Activated naive CD4-positive, alpha-beta T cell treated with anti-CD3 and anti-CD28 coated beads, Interleukin-2, amount 10 ng/mL, durations not matched to agents 7 days and 5 days (primary cell): ENCODE measurements at regions of chr3 and their contacts with region 1.

Region 1: DNA sequence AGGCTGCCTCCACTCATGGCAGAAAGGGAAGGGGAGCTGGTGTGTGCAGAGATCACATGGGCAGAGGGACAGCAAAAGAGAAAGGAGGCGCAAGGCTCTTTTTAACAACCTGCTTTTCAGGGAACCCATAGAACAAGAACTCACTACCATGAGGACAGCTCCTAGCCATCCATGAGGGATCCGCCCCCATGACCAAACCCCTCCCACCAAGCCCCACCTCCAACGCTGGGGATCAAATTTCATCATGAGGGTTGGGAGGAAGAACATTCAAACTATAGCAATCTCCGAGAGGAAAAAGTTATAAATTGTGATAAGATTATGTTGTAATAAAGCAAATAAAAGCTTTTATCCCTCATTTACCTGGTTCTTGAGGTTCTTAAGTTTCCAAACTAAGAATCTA is 84.7 kb upstream of the LMCD1 start:
- DNase-seq: no peak
- H3K4me3 Mint-ChIP-seq: no peak overlapping the region
- H3K27ac Mint-ChIP-seq: no peak overlapping the region
- H3K4me1 Mint-ChIP-seq: peaks cover 2% of the 10 kb centered on the region
- H3K27me3 Mint-ChIP-seq: no peaks in the 10 kb centered on the region

Region 2: GRCh38 chr3:8152821-8153418 is 264.0 kb before region 1 on chr3:
- CTCF ChIA-PET with region 1: no interaction called
- DNase-seq: no peak
- H3K4me3 Mint-ChIP-seq: no peak overlapping the region
- H3K27ac Mint-ChIP-seq: no peak overlapping the region
- H3K4me1 Mint-ChIP-seq: no peaks in the 10 kb centered on the region
- H3K27me3 Mint-ChIP-seq: no peaks in the 10 kb centered on the region

Region 3: GRCh38 chr3:8239718-8240695 is 177.0 kb before region 1 on chr3:
- CTCF ChIA-PET with region 1: interaction called, 17 read pairs
- DNase-seq: peak; percentile 44
- H3K4me3 Mint-ChIP-seq: no peak overlapping the region
- H3K27ac Mint-ChIP-seq: no peak overlapping the region
- H3K4me1 Mint-ChIP-seq: no peaks in the 10 kb centered on the region
- H3K27me3 Mint-ChIP-seq: no peaks in the 10 kb centered on the region

Region 4: GRCh38 chr3:8301728-8302462 is 115.1 kb before region 1 on chr3:
- CTCF ChIA-PET with region 1: interaction called, 22 read pairs
- DNase-seq: no peak
- H3K4me3 Mint-ChIP-seq: no peak overlapping the region
- H3K27ac Mint-ChIP-seq: no peak overlapping the region
- H3K4me1 Mint-ChIP-seq: peaks cover 4% of the 10 kb centered on the region
- H3K27me3 Mint-ChIP-seq: no peaks in the 10 kb centered on the region

Region 5: GRCh38 chr3:8324740-8325139 is 92.2 kb before region 1 on chr3:
- CTCF ChIA-PET with region 1: interaction called, 118 read pairs
- DNase-seq: peak; percentile 72
- H3K4me3 Mint-ChIP-seq: no peak overlapping the region
- H3K27ac Mint-ChIP-seq: no peak overlapping the region
- H3K4me1 Mint-ChIP-seq: no peaks in the 10 kb centered on the region
- H3K27me3 Mint-ChIP-seq: no peaks in the 10 kb centered on the region

Region 6: DNA sequence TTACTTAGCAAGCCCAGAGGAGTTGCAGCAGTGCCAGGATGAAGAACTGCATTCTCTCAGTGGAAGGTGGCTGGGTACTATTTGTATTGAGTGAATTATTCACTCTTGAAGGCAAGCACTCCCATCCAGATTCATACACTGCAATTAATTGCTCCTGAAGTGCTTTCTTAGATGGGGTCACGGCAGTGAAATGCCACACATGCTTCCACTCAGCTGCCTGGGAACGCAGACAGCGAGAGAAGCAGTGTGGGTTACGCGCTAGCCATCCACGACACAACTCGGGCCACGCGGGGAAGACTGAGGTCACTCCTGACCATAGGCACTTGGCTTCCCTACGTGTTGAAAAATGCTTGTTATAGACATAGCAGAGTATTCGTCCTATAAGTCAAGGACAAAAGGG is 53.8 kb after region 1 on chr3:
- CTCF ChIA-PET with region 1: no interaction called
- DNase-seq: no peak
- H3K4me3 Mint-ChIP-seq: no peak overlapping the region
- H3K27ac Mint-ChIP-seq: no peak overlapping the region
- H3K4me1 Mint-ChIP-seq: no peaks in the 10 kb centered on the region
- H3K27me3 Mint-ChIP-seq: no peaks in the 10 kb centered on the region

Region 7: GRCh38 chr3:8524249-8524648 is 107.3 kb after region 1 on chr3:
- CTCF ChIA-PET with region 1: no interaction called
- DNase-seq: no peak
- H3K4me3 Mint-ChIP-seq: no peak overlapping the region
- H3K27ac Mint-ChIP-seq: no peak overlapping the region
- H3K4me1 Mint-ChIP-seq: no peaks in the 10 kb centered on the region
- H3K27me3 Mint-ChIP-seq: peaks cover 9% of the 10 kb centered on the region